ENCODE measurements at regions of chr9 and their contacts with region 1.

Region 1: GRCh38 chr9:93041108-93041802 is 17.2 kb upstream of the SUSD3 start:
- DNase-seq: no peak
- ATAC-seq: peak in 1 of 2 donors; percentile 29
- H3K4me3 Mint-ChIP-seq: peak overlapping the region in 3 of 10 donors; percentile 22 to 51 (median 36)
- H3K27ac Mint-ChIP-seq: peak overlapping the region; percentile 87 to 94 (median 92)
- H3K4me1 Mint-ChIP-seq: peaks cover 36 to 82% (median 76%) of the 10 kb centered on the region in 4 donors
- H3K27me3 Mint-ChIP-seq: no peaks in the 10 kb centered on the region

Region 2: DNA sequence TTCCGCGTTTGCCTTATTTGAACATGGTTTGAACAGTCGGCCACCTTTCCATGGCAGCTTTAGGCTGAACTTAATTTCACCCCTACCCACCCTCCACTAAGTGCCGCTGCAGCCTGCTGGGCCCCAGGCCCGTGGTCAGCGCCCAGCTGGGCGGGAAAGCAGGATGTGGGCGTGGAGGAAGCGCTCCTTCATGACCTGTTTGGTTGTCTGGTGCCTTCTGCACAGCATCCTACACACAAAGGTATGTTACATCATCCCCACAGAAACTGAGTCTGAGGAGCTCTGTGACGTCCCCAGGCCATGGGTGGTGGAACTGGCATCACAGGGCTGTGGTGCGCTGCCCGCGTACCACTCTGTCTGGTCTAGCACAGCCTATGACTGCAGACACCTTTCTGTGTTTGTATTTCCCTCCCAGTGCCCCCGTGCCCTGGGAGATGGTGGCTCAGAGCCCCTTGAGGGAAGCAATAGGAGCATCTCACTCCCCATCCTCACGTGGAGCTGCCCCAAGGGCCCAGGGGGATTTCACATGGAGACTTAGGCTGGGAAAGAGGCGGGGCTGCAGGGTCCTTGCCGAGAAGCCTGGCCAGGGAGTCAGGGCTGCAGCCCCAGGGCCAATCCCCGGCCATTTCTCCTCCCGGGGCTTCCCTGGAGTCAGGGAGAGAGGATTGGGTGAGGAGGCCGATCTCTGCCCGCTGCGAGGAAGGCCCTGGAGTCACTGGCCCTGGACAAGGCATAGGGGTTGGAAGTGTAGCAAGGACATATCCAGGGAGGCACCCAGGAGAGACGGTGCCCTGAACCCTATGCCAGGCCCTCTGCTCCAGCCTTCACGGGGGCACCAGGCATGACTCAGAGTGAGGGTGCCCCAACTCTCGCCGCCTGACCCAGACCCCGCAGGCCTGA is 20.2 kb before region 1 on chr9:
- POLR2A ChIA-PET with region 1: interaction called, 608 read pairs
- DNase-seq: peak in 9 of 10 donors; percentile 37 to 79 (median 67)
- ATAC-seq: peak; percentile 72 to 89
- H3K4me3 Mint-ChIP-seq: peak overlapping the region in 7 of 10 donors; percentile 7 to 45 (median 22)
- H3K27ac Mint-ChIP-seq: peak overlapping the region; percentile 75 to 100 (median 98)
- H3K4me1 Mint-ChIP-seq: peaks cover 21 to 75% (median 51%) of the 10 kb centered on the region in 4 donors
- H3K27me3 Mint-ChIP-seq: no peaks in the 10 kb centered on the region

Region 3: DNA sequence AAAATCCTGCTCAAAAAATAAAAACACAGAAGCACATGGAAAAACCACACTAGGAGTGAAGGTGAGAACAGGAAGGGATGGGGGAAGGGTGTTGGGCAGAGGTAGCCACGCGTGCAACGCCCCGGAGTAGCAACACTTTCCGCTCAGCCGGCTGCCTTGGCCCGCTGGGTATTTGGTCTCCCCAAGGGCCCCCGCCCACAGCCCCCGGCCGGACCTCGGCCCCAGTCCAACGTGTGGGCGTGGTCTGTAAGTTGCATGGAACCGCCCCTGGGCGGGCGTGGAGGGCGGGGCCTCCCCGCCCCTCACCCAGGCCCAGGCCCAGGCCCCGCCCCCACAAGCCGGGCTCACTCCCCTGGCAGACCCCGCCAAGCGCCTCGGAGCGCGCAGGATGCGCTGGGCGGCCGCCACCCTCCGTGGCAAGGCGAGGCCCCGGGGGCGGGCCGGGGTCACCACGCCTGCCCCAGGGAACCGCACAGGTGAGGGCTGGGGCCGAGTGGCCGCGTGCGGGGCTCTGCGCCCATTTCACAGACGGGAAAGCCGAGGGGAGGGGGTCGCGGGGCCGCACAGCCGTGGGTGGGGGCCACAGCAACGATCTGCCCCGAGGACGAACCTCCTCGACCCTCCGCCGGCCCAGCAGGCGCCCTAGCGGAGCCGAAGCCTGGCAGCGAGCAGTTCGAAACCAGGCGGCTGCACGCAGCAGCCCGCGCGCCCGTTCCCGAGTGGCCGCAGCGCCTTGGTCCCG is 17.3 kb after region 1 on chr9 and contains the start of gene SUSD3:
- POLR2A ChIA-PET with region 1: interaction called, 159 read pairs
- DNase-seq: peak; percentile 57 to 80 (median 62)
- ATAC-seq: peak; percentile 57 to 63
- H3K4me3 Mint-ChIP-seq: peak within 1 kb of the TSS; percentile 85 to 96 (median 92)
- H3K27ac Mint-ChIP-seq: peak within 1 kb of the TSS; percentile 93 to 100 (median 100)
- H3K4me1 Mint-ChIP-seq: peaks cover 37 to 80% (median 73%) of the 10 kb centered on the region in 4 donors
- H3K27me3 Mint-ChIP-seq: no peaks in the 10 kb centered on the region
- polyA plus RNA-seq, gene SUSD3: 86.7 to 208 (median 145) TPM

Region 4: GRCh38 chr9:93086447-93087224 is 45.4 kb after region 1 on chr9:
- POLR2A ChIA-PET with region 1: no interaction called
- DNase-seq: peak in 1 of 10 donors; percentile 56
- ATAC-seq: no peak
- H3K4me3 Mint-ChIP-seq: peak overlapping the region in 1 of 10 donors; percentile 29
- H3K27ac Mint-ChIP-seq: peak overlapping the region in 9 of 10 donors; percentile 2 to 88 (median 60)
- H3K4me1 Mint-ChIP-seq: peaks cover 14 to 52% (median 30%) of the 10 kb centered on the region in 4 donors
- H3K27me3 Mint-ChIP-seq: no peaks in the 10 kb centered on the region

Measured in naive thymus-derived CD8-positive, alpha-beta T cell (primary cell).